Activated B cell treated with CpG ODN at 0.5 μM for 24 hours (primary cell): ENCODE measurements at regions of chr6 and their contacts with region 1.

Region 1: DNA sequence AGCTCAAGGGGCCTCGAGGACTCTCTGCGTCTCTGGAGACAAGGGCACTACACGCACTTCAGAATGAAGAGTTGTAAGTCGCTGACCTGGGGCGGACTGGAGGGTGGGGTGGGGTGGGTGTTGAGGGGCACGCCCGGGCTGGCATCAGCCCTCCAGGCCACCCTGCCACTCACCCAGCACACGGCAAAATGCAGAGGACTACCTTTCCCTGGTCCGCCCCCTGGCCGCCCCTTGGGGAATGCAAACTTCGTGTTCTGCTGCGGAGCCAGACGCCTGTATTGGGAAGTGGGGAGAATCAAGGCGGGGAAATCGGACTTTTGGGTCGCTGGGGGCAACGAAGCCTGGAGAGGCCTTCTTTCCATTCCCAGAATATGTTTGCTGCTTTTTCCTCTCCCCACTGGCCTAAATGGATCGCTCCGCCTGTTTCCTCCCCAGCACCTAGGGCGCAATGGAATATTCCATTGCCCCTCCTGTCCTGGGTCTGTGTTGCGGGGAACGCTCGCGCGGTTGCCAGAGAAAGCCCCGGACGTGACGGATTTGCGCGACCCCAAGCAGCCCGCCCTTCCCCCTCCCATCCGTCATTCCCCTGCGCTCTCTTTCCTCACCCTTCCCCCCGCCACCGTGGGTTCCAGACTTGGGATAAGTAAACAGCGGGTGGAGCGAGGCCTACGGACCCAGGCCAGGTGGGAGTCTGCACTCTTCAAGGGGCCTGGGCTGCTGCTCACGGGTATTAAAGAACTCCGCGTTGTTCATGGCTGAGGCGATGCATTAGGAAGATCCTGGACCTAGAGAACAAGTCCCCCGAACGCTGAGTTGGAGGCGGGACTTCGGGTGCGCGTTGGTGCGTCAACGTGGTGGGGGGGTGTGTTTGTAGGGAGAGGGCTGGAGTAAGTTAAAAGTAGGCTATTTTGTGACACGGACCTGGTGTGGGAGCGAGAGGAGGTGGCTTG is at the start of gene PPT2:
- DNase-seq: peak; percentile 60
- ATAC-seq: peak; percentile 49
- H3K4me3 Mint-ChIP-seq: peak within 1 kb of the TSS; percentile 96
- H3K27ac Mint-ChIP-seq: peak within 1 kb of the TSS; percentile 59
- H3K4me1 Mint-ChIP-seq: peaks cover 33% of the 10 kb centered on the region
- H3K27me3 Mint-ChIP-seq: peaks cover 29% of the 10 kb centered on the region
- CTCF ChIP-seq: no peak
- total RNA-seq, gene PPT2: 1.8 and 3.0 TPM in 2 replicates

Region 2: DNA sequence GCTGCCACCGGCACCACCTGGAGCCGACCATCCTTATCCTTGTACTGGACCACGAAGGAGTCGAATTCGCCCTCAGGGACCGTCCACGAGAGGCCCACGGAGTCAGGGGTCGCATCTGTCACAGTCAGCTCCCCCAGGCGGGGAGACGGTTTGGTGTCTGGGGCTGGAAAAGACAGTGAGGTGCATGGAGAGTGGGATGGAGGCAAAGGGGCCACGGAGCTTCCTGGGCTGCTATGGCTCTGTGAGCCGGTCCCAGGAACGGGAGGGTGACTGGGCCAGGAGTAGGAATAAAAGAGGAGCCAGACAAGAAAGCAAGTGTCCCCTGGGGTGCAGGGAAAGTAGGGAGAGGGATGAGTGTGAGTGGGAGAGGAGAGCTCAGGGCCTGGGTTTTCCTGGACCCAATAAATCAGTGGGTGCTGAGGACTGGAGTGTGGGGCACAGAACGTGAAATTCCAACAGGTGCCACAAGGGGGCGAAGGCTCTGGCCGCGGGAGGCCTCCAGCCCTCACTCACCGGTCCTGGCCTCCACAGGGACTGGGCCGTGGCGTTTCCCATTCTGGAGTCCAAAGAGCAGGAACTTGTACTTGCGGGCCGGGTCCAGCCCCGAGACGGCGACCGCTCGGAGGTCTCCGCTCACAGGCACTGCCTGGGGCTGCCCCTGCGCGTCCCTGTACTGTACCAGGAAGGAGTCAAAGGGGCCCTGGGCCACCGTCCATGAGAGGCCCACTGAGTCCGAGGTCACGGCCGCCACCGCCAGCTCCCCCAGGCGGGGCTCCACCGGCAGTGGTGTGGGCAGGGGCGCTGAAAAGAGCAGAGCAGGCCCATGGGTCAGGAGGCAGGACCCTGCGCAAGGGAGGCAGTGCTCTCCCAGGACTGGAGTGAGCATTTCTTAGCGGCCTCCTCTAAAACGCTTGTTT is 105.7 kb before region 1 on chr6:
- CTCF ChIA-PET with region 1: no interaction called
- POLR2A ChIA-PET with region 1: no interaction called
- intact Hi-C with region 1: loop called (anchors 10 kb)
- DNase-seq: peak; percentile 71
- ATAC-seq: peak; percentile 92
- H3K4me3 Mint-ChIP-seq: no peak overlapping the region
- H3K27ac Mint-ChIP-seq: no peak overlapping the region
- H3K4me1 Mint-ChIP-seq: peaks cover 4% of the 10 kb centered on the region
- H3K27me3 Mint-ChIP-seq: peaks cover 7% of the 10 kb centered on the region
- CTCF ChIP-seq: no peak

Region 3: GRCh38 chr6:32118782-32119628 is 34.8 kb before region 1 on chr6:
- CTCF ChIA-PET with region 1: interaction called, 10 read pairs
- POLR2A ChIA-PET with region 1: interaction called, 5 read pairs
- intact Hi-C with region 1: loop called (anchors 1 kb)
- DNase-seq: peak; percentile 57
- ATAC-seq: peak; percentile 94
- H3K4me3 Mint-ChIP-seq: no peak overlapping the region
- H3K27ac Mint-ChIP-seq: peak overlapping the region; percentile 56
- H3K4me1 Mint-ChIP-seq: peaks cover 8% of the 10 kb centered on the region
- H3K27me3 Mint-ChIP-seq: no peaks in the 10 kb centered on the region
- CTCF ChIP-seq: peak; percentile 57

Region 4: GRCh38 chr6:32177788-32178546 is 24.1 kb after region 1 on chr6 and contains the start of gene RNF5:
- CTCF ChIA-PET with region 1: interaction called, 3 read pairs
- POLR2A ChIA-PET with region 1: no interaction called
- intact Hi-C with region 1: loop called (anchors 1 kb)
- DNase-seq: peak; percentile 63
- ATAC-seq: peak; percentile 82
- H3K4me3 Mint-ChIP-seq: peak within 1 kb of the TSS; percentile 96
- H3K27ac Mint-ChIP-seq: peak within 1 kb of the TSS; percentile 99
- H3K4me1 Mint-ChIP-seq: peaks cover 54% of the 10 kb centered on the region
- H3K27me3 Mint-ChIP-seq: no peaks in the 10 kb centered on the region
- CTCF ChIP-seq: no peak
- total RNA-seq, gene RNF5: 39.7 and 41.8 TPM in 2 replicates

Region 5: DNA sequence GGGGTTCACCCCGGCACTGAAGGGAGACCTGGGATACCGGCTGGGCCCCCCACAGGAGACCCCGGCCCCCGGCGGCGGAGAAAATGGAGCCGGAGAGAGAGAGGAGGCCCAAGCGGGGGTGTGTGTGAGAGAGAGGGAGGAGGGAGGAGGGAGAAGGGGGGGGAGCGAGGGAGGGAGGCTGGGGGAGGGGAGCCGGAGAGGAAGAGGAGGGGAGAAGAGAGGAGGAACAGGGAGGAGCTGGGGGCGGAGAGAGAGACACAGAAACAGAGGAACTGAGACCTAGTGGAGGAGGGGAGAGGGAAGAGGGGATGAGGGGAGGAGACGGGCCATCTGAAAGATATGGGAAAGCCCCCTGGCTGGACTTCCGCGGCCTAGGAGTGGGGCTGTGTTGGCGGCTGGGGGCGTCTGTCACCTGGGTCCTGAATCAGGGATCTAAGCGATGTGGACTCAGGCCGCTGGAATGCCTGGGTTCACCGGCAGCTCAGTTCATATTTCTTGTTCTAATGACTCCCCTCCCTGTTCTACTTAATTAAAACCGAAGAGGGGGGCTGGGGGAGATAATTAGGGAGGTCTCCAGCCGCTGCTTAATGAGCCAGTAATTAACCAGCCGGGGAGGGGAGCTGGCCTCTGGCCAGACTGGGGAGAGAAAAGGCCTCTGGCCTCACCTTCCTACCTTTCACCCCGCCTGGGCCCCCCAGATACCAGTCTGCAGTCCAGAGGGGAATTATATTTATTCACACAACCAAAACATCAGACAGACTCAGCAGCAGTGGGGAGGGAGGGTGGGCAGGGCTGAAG is 36.4 kb after region 1 on chr6 and contains the start of gene PBX2:
- CTCF ChIA-PET with region 1: interaction called, 4 read pairs
- POLR2A ChIA-PET with region 1: interaction called, 5 read pairs
- intact Hi-C with region 1: loop called (anchors 1 kb)
- DNase-seq: peak; percentile 61
- ATAC-seq: peak; percentile 86
- H3K4me3 Mint-ChIP-seq: peak within 1 kb of the TSS; percentile 91
- H3K27ac Mint-ChIP-seq: peak within 1 kb of the TSS; percentile 96
- H3K4me1 Mint-ChIP-seq: peaks cover 85% of the 10 kb centered on the region
- H3K27me3 Mint-ChIP-seq: no peaks in the 10 kb centered on the region
- CTCF ChIP-seq: no peak
- total RNA-seq, gene PBX2: 134 and 153 TPM in 2 replicates